ENCODE measurements at regions of chr10 and their contacts with region 1.

Region 1: GRCh38 chr10:77173615-77174461 is 463.8 kb downstream of the KCNMA1 start:
- DNase-seq: peak in 2 of 3 donors; percentile 68 to 84
- ATAC-seq: peak; percentile 88
- H3K4me3 ChIP-seq: no peak overlapping the region
- H3K4me1 ChIP-seq: no peaks in the 10 kb centered on the region
- CTCF ChIP-seq: peak; percentile 58

Region 2: DNA sequence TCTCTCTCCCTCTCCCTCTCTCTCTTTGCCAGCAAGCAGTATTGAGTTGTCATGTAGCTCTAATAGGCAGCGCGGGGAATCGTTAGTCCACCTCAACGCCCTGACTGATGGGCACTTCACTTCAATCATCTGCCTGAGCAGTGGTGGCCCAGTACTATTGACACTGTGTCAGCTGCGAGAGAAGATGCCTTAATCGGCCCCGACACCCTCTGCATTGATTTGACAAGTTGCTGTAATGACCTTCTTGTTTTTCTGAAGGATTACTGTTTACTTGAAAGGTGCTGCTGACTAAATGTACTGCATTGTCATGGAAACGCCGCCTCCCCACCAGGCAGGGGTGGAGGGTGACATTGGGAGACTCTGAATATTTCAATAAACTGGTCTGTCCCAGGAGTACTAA is 450.0 kb before region 1 on chr10:
- intact Hi-C with region 1: no loop called
- DNase-seq: no peak
- ATAC-seq: no peak
- H3K4me3 ChIP-seq: no peak overlapping the region
- H3K4me1 ChIP-seq: no peaks in the 10 kb centered on the region
- CTCF ChIP-seq: no peak

Region 3: GRCh38 chr10:77247031-77247990 is 73.5 kb after region 1 on chr10:
- intact Hi-C with region 1: loop called in 1 of 2 experiments (anchors 10 kb)
- DNase-seq: peak in 1 of 3 donors; percentile 8
- ATAC-seq: peak; percentile 52
- H3K4me3 ChIP-seq: no peak overlapping the region
- H3K4me1 ChIP-seq: peaks cover 3% of the 10 kb centered on the region
- CTCF ChIP-seq: no peak

Region 4: DNA sequence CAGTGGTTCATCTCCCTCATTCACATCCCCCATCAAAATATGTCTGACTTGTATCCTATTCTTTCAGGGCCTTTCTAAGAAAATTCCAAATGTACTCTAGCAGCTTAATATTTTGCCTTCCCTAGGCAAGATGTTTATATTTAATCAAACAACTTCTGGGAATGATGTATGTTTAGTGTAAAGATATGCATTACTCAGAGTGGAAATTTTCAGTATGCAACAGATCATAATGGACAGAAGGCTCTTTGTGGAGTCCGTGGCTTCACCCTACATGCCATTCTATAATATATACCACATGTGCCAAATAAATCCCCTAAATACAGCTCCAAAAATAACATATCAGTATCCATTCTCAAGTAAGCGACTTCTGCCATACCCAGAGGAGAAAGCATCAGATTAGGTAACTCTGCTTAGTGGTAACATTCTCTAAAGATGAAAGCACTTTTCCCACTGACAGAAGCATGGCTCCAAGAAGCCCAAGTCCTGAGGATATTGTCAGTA is 147.2 kb after region 1 on chr10:
- intact Hi-C with region 1: no loop called
- DNase-seq: no peak
- ATAC-seq: no peak
- H3K4me3 ChIP-seq: no peak overlapping the region
- H3K4me1 ChIP-seq: no peaks in the 10 kb centered on the region
- CTCF ChIP-seq: no peak

Region 5: GRCh38 chr10:77391605-77392235 is 217.9 kb after region 1 on chr10:
- intact Hi-C with region 1: loop called (anchors 10 kb)
- DNase-seq: peak in 2 of 3 donors; percentile 75 to 84
- ATAC-seq: peak; percentile 80
- H3K4me3 ChIP-seq: no peak overlapping the region
- H3K4me1 ChIP-seq: no peaks in the 10 kb centered on the region
- CTCF ChIP-seq: peak; percentile 48

Region 6: GRCh38 chr10:77641788-77642397 is 468.1 kb after region 1 on chr10:
- intact Hi-C with region 1: loop called (anchors 2 to 5 kb)
- DNase-seq: peak in 1 of 3 donors; percentile 92
- ATAC-seq: peak; percentile 62
- H3K4me3 ChIP-seq: no peak overlapping the region
- H3K4me1 ChIP-seq: peaks cover 7% of the 10 kb centered on the region
- CTCF ChIP-seq: peak; percentile 59

Region 7: DNA sequence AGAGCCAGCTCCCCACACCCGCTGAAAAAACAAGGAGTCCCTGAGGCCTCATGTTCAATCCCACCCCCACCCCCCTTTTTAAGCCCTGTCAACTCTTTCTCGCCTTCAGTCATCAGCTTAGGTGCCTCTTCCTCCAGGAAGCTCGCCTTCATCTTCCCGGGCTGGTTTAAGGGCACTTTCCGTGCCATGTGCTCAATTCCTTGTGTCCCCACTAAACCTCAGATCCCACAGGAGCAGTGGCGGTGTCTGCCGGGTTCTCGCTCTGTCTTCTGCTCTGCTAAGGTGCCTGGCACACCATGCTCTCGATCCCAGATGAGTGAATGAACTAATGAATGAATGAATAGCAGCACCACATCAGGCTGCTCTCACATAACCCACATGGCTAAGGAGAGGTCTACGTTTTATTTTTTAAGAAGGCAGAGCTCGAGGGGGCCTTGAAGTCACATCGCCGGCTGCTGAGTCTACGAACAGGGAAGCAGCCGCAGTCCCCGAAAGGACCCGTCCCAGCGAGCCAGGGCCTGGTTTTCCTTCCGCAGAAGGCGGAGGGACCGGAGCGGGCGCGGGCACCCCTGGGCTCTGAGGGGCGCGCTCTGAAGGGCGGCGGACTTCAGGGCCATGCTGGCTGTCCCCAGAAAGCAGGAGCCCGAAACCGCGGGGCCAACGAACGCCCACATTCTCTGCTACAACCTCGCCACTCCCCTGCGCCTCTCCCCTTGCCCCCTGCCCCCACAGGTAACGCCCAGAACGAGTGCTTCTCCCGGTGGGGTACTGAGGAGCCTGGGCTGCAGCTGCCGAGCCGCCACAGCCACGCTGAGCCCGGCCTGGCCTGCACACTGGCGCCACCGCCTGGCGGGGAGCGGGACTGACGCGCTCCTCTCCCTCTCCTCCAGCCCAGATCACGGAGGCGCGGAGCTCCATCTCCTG is 537.2 kb after region 1 on chr10:
- intact Hi-C with region 1: loop called in 1 of 2 experiments (anchors 10 kb)
- DNase-seq: peak; percentile 69 to 90 (median 85)
- ATAC-seq: peak; percentile 99
- H3K4me3 ChIP-seq: no peak overlapping the region
- H3K4me1 ChIP-seq: no peaks in the 10 kb centered on the region
- CTCF ChIP-seq: peak; percentile 99

Measured in mucosa of descending colon (tissue), 3 donors.